Astrocyte of the cerebellum (primary cell): ENCODE measurements at regions of chr7 and their contacts with region 1.

Region 1: GRCh38 chr7:88254716-88255115 is 34.9 kb upstream of the SRI start:
- DNase-seq: no peak
- H3K4me3 ChIP-seq: no peak overlapping the region
- CTCF ChIP-seq: no peak

Region 2: DNA sequence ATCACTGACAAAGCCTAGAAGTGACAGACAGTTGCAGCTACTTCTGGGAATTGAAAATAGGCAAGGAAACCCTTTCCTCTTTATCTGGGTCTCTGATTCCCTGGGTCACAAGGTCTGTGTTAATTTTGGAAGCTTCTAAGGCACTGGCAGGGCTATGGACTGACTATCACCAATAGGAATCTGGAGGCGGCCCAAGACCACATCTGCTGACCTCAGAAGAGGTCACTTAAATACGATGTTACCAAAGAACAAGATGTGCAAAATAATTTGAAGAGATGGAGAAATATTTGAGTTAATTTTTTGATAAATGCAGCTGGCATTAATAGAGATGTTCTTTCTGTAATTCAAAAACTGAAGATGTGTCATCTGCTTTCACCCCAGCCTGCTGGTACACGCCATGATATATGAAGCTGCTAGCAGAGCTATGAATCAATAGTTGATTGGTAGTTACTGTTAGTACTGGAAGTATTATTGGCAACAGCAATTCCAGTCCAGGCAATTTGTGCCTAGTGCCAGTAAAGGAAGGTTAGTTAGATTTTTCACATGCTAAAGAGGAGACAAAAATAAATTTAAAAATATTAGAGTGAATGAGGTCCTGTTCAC is 57.4 kb after region 1 on chr7:
- in situ Hi-C with region 1: loop called (anchors 5 kb)
- DNase-seq: no peak
- H3K4me3 ChIP-seq: no peak overlapping the region
- CTCF ChIP-seq: no peak